H1 (cell line): ENCODE measurements at regions of chr12 and their contacts with region 1.

Region 1: DNA sequence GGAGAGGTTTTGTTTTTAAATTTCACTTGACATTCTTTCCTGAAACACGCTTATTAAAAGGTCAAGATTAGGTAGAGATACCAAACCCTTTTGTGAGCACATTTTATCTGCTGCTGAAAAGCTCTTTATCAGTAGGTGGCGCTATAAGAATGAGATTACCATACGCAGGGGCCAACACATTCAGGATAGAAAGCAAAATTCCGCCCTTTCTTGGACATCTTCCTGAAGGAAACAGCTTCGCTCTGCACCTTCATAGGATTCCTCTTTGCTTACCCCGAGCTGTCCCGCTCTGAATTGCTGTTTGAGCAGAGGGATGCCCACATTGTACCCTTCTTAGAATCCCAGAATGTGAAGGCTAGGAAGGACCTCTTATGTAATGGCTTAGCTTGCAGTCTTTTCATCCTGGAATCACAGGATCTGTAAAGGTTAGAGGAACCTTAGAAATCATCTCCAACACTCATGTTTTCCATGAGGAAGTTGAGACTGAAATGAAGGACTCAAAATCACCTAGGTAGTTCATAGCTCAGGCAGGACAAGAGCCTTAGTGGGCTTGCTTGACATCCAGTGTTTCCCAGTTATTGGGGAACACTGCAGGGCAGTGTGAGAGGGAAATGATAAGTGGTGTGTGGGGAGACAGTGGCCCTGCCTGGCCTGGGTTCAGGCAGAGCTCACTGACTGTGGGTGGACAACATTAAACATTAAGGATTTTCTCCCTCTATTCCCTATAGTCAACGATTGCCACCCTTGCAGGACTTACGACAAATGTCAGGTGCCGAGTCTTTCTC is 38.7 kb upstream of the CRY1 start:
- DNase-seq: peak; percentile 7 to 50
- H3K4me3 ChIP-seq: no peak overlapping the region
- H3K27ac ChIP-seq: no peak overlapping the region
- H3K4me1 ChIP-seq: peaks cover 0 to 5% (median 1%) of the 10 kb centered on the region in 4 experiments; a peak in 2 of 7 replicates
- H3K27me3 ChIP-seq: no peaks in the 10 kb centered on the region
- CTCF ChIP-seq: peak in 2 of 3 experiments; percentile 76 to 78; a peak in 3 of 4 replicates
- EP300 ChIP-seq: no peak
- POLR2A ChIP-seq: no peak
- RAD21 ChIP-seq: peak; percentile 94 to 95

Region 2: GRCh38 chr12:107014028-107014427 is 118.0 kb before region 1 on chr12:
- CTCF ChIA-PET with region 1: no interaction called
- POLR2A ChIA-PET with region 1: no interaction called
- DNase-seq: no peak
- H3K4me3 ChIP-seq: no peak overlapping the region
- H3K27ac ChIP-seq: no peak overlapping the region
- H3K4me1 ChIP-seq: no peaks in the 10 kb centered on the region
- H3K27me3 ChIP-seq: no peaks in the 10 kb centered on the region
- CTCF ChIP-seq: peak in 2 of 3 experiments; percentile 37 to 56; a peak in 3 of 4 replicates
- EP300 ChIP-seq: no peak
- POLR2A ChIP-seq: no peak
- RAD21 ChIP-seq: peak; percentile 32 to 43; a peak in 3 of 4 replicates

Region 3: GRCh38 chr12:107038660-107039170 is 93.3 kb before region 1 on chr12:
- CTCF ChIA-PET with region 1: no interaction called
- POLR2A ChIA-PET with region 1: no interaction called
- DNase-seq: no peak
- H3K4me3 ChIP-seq: no peak overlapping the region
- H3K27ac ChIP-seq: no peak overlapping the region
- H3K4me1 ChIP-seq: no peaks in the 10 kb centered on the region
- H3K27me3 ChIP-seq: no peaks in the 10 kb centered on the region
- CTCF ChIP-seq: no peak
- EP300 ChIP-seq: no peak
- POLR2A ChIP-seq: no peak
- RAD21 ChIP-seq: no peak

Region 4: DNA sequence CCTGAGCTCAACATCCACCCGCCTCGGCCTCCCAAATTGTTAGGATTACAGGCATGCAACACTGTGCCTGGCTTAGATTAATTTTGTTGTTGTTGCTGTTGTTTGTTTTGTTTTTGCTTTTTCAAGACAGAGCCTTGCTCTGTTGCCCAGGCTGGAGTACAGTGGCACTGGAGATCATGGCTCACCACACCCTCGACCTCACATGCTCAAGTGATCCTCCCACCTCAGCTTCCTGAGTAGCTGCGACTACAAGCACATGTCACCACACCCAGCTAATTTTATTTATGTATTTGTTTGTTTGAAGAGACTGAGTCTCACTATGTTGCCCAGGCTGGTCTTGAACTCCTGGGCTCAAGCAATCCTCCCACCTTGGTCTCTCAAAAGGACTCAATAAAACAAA is 65.3 kb before region 1 on chr12:
- CTCF ChIA-PET with region 1: no interaction called
- POLR2A ChIA-PET with region 1: no interaction called
- DNase-seq: no peak
- H3K4me3 ChIP-seq: no peak overlapping the region
- H3K27ac ChIP-seq: no peak overlapping the region
- H3K4me1 ChIP-seq: no peaks in the 10 kb centered on the region
- H3K27me3 ChIP-seq: no peaks in the 10 kb centered on the region
- CTCF ChIP-seq: no peak
- EP300 ChIP-seq: no peak
- POLR2A ChIP-seq: no peak
- RAD21 ChIP-seq: no peak

Region 5: DNA sequence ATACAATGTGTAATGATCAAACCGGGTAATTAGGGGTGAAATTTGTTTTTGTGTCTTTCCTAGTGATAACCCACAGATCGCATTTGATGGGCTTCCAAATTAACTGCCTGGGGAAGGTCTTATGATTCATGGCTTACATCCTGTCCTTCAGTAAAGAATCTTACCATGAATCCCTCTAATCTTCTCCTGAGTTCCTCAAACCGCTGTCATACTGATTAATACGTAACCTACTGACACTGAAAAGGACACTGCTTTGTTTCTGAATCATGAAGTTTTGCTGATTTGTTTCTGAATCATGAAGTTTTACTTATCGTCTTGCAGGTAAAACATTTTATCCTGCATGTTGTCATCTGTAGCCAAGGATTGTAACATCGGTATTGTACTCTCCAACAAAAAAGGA is 13.4 kb after region 1 on chr12:
- CTCF ChIA-PET with region 1: interaction called, 45 read pairs
- POLR2A ChIA-PET with region 1: no interaction called
- DNase-seq: no peak
- H3K4me3 ChIP-seq: no peak overlapping the region
- H3K27ac ChIP-seq: no peak overlapping the region
- H3K4me1 ChIP-seq: no peaks in the 10 kb centered on the region
- H3K27me3 ChIP-seq: no peaks in the 10 kb centered on the region
- CTCF ChIP-seq: no peak
- EP300 ChIP-seq: no peak
- POLR2A ChIP-seq: no peak
- RAD21 ChIP-seq: no peak

Region 6: DNA sequence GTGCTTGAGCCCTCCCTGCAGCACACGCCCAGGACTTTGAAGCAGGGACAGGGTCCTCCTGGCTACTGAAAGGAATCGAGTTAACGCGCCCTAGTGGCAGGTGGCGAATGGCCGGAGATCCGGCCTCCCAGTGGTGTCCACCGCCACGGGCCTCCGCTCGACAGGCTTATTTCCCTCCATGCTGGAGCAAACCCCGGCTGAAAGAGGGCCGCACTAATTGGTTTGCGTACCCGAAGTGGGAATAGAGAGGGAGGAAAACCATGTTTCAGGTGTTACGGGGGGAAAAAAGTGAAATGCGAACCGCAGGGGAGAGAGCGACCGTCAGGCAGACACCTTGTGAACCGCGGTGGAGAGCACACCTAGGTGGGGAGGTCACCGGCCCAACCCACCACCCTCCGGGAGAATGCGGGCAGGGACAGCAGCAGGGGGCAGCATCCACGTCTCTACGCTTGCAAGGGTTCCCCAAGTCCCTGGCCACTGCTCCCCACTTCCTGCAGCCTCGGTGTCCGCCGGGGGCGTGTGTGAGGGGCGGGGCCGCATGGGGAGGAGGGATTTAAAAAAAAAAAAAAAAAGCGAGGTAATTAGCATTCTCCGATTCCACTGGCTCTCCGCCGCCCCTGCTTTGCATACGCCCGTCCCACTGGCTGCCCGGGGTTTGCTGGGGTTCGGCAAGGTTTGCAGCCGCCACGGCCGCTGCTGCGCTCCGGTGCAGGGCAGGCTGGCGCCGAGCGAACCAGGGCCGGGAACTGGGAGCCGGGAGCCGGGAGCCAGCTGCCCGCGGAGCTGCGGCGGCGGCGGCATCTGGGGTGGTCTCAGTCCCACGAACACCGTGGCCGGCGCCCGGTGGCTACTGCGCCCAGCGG is 186.0 kb after region 1 on chr12:
- CTCF ChIA-PET with region 1: interaction called, 94 read pairs
- POLR2A ChIA-PET with region 1: interaction called, 3 read pairs
- DNase-seq: peak; percentile 73 to 85
- H3K4me3 ChIP-seq: peak overlapping the region; percentile 55 to 77 (median 70)
- H3K27ac ChIP-seq: no peak overlapping the region
- H3K4me1 ChIP-seq: peaks cover 0 to 12% (median 5%) of the 10 kb centered on the region in 4 experiments; a peak in 4 of 7 replicates
- H3K27me3 ChIP-seq: peaks cover 7 to 37% (median 34%) of the 10 kb centered on the region in 4 experiments
- CTCF ChIP-seq: peak; percentile 48 to 67 (median 66)
- EP300 ChIP-seq: no peak
- POLR2A ChIP-seq: 0 out of 3 replicates have a peak, but pooled peaks of 1 of the 2 experiments have one; percentile 26
- RAD21 ChIP-seq: peak; percentile 46 to 61

Region 7: DNA sequence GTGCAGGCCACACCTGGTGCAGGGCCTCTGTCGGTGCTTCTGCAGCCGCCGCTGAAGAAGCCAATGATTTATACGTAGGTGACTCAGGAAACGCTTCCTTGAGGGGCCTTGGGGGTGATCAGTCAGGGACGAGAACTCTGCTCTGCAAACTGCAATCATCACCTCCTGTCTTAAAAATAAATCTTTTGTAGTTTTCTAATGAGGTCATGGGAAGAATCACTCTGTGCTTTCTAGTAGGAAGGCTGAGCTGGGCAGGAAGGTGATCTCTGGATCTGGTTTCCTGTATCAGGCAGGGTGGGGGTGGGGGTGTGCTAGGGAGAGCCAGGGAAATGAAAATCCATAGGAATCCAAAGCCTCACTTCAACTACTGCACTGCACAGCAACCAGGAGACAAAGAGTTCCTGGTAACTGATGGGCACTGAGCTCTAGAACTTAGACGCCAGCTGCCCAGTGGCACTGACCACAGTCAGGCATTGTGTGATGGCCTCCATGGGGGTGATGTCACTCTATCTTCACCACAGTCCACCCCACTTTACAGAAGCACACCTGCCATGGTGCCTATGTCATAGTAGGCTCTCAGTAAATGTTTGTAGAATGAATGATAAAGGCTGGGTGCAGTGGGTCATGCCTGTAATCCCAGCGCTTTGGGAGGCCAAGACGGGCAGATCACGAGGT is 261.2 kb after region 1 on chr12:
- CTCF ChIA-PET with region 1: interaction called, 193 read pairs
- POLR2A ChIA-PET with region 1: interaction called, 3 read pairs
- DNase-seq: no peak
- H3K4me3 ChIP-seq: no peak overlapping the region
- H3K27ac ChIP-seq: no peak overlapping the region
- H3K4me1 ChIP-seq: peaks cover 1 to 8% (median 4%) of the 10 kb centered on the region in 4 experiments; a peak in 4 of 7 replicates
- H3K27me3 ChIP-seq: no peaks in the 10 kb centered on the region; a peak in 1 of 7 replicates
- CTCF ChIP-seq: no peak
- EP300 ChIP-seq: no peak
- POLR2A ChIP-seq: no peak
- RAD21 ChIP-seq: no peak

Region 8: DNA sequence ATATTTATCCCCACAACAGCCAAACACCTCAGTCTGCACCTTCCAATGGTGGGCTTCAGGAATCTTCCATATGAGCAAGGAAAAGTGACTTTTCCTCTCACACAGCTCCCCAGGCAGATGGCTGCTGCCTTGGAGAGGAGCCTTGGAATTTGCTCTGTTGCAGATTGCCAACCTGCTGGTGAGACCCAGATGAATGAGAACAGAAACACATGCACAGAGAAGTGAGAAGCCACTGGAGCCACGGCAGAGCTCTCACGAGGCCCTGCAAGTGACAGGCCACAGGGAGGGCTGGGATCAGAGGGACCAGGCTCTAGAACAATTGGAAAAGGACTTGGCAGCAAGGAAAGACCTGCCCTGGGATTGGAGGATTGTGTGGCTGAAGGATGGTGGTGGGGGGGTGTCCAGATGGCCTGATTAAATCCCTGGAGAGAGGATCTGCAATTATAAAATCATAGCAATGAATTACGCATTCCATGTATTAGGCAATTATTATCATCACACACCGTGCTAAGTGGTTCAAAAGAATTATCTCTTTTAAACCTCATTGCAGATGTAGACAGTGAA is 468.6 kb after region 1 on chr12:
- CTCF ChIA-PET with region 1: interaction called, 186 read pairs
- POLR2A ChIA-PET with region 1: no interaction called
- DNase-seq: no peak
- H3K4me3 ChIP-seq: no peak overlapping the region
- H3K27ac ChIP-seq: no peak overlapping the region
- H3K4me1 ChIP-seq: peaks cover 0 to 5% (median 0%) of the 10 kb centered on the region in 4 experiments; a peak in 1 of 7 replicates
- H3K27me3 ChIP-seq: no peaks in the 10 kb centered on the region
- CTCF ChIP-seq: no peak
- EP300 ChIP-seq: no peak
- POLR2A ChIP-seq: no peak
- RAD21 ChIP-seq: no peak